Endothelial cell of umbilical vein (primary cell): ENCODE measurements at regions of chr10 and their contacts with region 1.

Region 1: DNA sequence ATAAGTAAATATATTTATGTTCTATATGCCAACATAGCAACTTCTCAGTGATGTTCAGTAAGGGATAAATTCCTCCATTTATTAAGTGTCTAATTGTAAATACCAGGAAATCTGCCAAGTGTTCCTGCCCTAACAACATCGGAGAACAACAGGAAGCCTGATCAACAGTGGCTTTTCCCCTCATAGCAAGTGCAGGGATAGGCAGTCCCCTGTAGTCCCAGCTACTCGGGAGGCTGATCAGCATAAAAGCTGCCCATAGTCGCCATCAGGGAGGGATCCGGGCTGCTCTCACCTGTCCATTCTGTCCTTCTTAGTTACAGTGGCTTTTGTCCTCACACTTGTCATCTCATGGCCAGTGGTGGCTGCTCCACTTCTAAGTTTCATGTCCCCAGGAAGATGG is 141.3 kb downstream of the IDE start:
- DNase-seq: peak; percentile 48
- H3K4me3 ChIP-seq: no peak overlapping the region
- H3K27ac ChIP-seq: no peak overlapping the region
- H3K4me1 ChIP-seq: peaks cover 10% of the 10 kb centered on the region
- H3K27me3 ChIP-seq: no peaks in the 10 kb centered on the region
- CTCF ChIP-seq: no peak
- POLR2A ChIP-seq: no peak

Region 2: DNA sequence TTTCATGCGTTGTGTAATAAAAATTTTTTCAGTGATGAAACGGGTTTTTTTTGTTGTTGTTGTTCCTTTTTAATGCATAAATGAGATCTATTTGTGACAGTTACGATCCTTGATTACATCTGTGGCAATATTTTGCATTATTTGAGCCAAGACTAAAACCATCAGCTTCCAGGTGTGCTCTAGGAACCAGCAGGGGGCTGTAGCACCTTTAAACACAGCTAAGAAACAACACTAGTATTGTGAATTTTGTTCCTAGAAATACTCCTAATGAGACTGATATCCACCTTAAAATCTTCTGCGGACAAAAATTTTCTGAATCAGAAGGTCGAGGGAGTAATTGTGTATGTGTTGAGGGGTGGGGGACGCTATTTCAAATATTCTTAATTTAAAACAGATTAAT is 576.0 kb before region 1 on chr10:
- CTCF ChIA-PET with region 1: no interaction called
- POLR2A ChIA-PET with region 1: no interaction called
- dilution Hi-C with region 1: no loop called
- intact Hi-C with region 1: loop called (anchors 5 kb)
- DNase-seq: peak; percentile 37
- H3K4me3 ChIP-seq: no peak overlapping the region
- H3K27ac ChIP-seq: no peak overlapping the region
- H3K4me1 ChIP-seq: no peaks in the 10 kb centered on the region
- H3K27me3 ChIP-seq: no peaks in the 10 kb centered on the region
- CTCF ChIP-seq: peak; percentile 21 to 46
- POLR2A ChIP-seq: no peak

Region 3: GRCh38 chr10:92074126-92074887 is 358.3 kb before region 1 on chr10:
- CTCF ChIA-PET with region 1: interaction called, 13 read pairs
- POLR2A ChIA-PET with region 1: interaction called, 6 read pairs
- dilution Hi-C with region 1: no loop called
- intact Hi-C with region 1: loop called (anchors 1 kb)
- DNase-seq: peak; percentile 50
- H3K4me3 ChIP-seq: no peak overlapping the region
- H3K27ac ChIP-seq: no peak overlapping the region
- H3K4me1 ChIP-seq: peaks cover 8% of the 10 kb centered on the region
- H3K27me3 ChIP-seq: no peaks in the 10 kb centered on the region
- CTCF ChIP-seq: peak in 1 of 2 donors; percentile 13
- POLR2A ChIP-seq: no peak

Region 4: DNA sequence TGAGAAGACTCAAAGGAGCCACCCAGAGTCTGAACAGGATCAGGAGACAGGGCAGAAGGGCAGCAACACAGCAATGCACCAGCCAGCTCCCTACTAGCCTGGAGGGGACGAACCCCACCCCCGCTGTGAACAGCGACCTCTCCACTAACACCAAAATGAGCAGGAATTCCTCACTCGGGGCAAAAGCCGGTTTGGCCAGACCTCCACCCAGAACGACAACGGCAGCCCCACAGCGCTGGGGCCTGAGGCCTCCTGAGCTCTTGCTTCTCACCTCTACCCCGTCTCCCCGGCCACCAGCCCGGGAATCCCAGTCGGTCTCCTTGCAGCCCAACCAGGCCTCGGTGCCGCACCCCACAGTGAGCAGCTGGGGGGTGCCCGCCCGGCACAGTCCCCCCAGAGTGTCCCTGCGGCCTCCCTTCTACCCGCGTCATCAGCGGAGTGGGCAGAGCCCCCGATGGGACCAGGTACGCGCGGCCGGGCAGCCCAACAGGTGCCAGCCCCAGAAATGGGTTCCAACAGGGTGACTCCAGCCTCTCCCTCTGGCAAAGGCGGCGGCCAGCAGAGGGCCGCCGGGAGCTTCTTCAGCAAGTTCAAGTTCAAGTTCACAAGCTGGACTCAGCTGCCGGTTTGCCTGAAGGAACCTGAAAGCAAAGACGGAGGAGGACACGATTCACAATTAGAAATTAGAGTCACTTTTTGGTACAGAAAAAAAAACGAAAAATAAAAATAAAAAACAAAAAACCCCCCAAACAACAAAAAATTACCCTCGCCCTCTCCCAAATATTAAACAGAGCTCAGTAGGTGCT is 12.7 kb before region 1 on chr10:
- CTCF ChIA-PET with region 1: interaction called, 10 read pairs
- POLR2A ChIA-PET with region 1: no interaction called
- dilution Hi-C with region 1: no loop called
- intact Hi-C with region 1: no loop called
- DNase-seq: peak; percentile 38
- H3K4me3 ChIP-seq: peak overlapping the region; percentile 33 to 34 (median 33)
- H3K27ac ChIP-seq: no peak overlapping the region
- H3K4me1 ChIP-seq: peaks cover 4% of the 10 kb centered on the region
- H3K27me3 ChIP-seq: peaks cover 2 to 3% of the 10 kb centered on the region in 2 experiments
- CTCF ChIP-seq: peak; percentile 46 to 67
- POLR2A ChIP-seq: no peak